ENCODE measurements at regions of chr3 and their contacts with region 1.

Region 1: GRCh38 chr3:143674100-143674968 is 173.9 kb downstream of the SLC9A9 start:
- DNase-seq: peak; percentile 47
- ATAC-seq: peak; percentile 93
- H3K4me3 Mint-ChIP-seq: peak overlapping the region; percentile 76
- H3K27ac Mint-ChIP-seq: peak overlapping the region; percentile 98
- H3K4me1 Mint-ChIP-seq: peaks cover 56% of the 10 kb centered on the region
- H3K27me3 Mint-ChIP-seq: no peaks in the 10 kb centered on the region
- CTCF ChIP-seq: peak; percentile 72

Region 2: GRCh38 chr3:142828703-142829305 is 845.5 kb before region 1 on chr3:
- CTCF ChIA-PET with region 1: interaction called, 3 read pairs
- POLR2A ChIA-PET with region 1: no interaction called
- intact Hi-C with region 1: loop called (anchors 1 kb)
- DNase-seq: no peak
- ATAC-seq: peak; percentile 75
- H3K4me3 Mint-ChIP-seq: no peak overlapping the region
- H3K27ac Mint-ChIP-seq: no peak overlapping the region
- H3K4me1 Mint-ChIP-seq: no peaks in the 10 kb centered on the region
- H3K27me3 Mint-ChIP-seq: peaks cover 12% of the 10 kb centered on the region
- CTCF ChIP-seq: no peak

Region 3: GRCh38 chr3:143040261-143040879 is 634.0 kb before region 1 on chr3:
- CTCF ChIA-PET with region 1: interaction called, 19 read pairs
- POLR2A ChIA-PET with region 1: no interaction called
- intact Hi-C with region 1: loop called (anchors 1 kb)
- DNase-seq: no peak
- ATAC-seq: no peak
- H3K4me3 Mint-ChIP-seq: no peak overlapping the region
- H3K27ac Mint-ChIP-seq: no peak overlapping the region
- H3K4me1 Mint-ChIP-seq: peaks cover 3% of the 10 kb centered on the region
- H3K27me3 Mint-ChIP-seq: no peaks in the 10 kb centered on the region
- CTCF ChIP-seq: no peak

Region 4: DNA sequence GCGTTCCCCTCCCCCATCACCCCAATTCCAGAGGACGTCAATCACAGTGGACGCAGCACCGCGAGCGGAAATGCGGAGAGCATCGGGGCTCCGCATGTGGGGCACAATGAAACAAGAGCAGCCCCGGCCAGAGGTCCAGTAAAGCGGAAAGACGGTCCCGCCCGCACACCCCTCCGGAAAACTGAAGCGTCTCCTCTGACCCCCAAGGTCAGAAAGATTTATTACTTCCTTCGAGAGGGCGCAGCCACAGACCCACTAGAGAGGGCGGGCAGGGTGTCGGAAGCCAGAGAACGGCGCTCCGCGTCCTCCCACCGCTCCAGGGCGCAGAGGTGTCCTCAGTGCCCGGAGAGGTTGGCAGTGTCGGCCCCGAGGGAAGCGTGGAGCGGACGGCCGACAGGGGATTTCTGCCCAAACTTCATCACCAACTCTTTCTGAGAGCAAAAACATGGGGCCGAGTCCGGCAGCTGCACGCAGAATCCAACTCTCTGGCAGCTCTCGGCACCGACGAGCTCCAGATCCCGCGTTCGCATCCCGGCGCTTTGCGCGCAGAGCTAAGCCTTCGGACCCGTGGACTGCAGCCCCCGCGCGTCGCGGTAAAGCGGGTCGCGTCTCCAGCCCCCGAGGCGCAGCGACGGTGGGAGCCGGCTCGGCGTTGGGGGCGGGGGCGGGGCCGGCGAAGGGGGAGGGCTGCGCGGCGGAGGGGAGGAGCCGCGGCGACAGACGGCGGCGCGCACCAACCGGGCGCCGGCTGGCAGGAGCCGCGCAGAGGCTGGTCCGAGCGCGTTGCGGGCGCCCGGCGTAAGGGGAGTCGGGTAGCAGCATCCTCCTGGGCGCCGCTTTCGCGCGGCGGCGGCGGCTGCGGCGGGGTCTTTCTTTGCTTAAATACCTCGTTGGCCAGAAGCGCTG is 555.1 kb before region 1 on chr3 and contains the start of gene CHST2:
- CTCF ChIA-PET with region 1: interaction called, 12 read pairs
- POLR2A ChIA-PET with region 1: no interaction called
- intact Hi-C with region 1: loop called (anchors 1 kb)
- DNase-seq: peak; percentile 77
- ATAC-seq: peak; percentile 89
- H3K4me3 Mint-ChIP-seq: peak within 1 kb of the TSS; percentile 90
- H3K27ac Mint-ChIP-seq: peak within 1 kb of the TSS; percentile 78
- H3K4me1 Mint-ChIP-seq: peaks cover 32% of the 10 kb centered on the region
- H3K27me3 Mint-ChIP-seq: no peaks in the 10 kb centered on the region
- CTCF ChIP-seq: no peak
- total RNA-seq, gene CHST2: 11.8 and 12.3 TPM in 2 replicates

Region 5: DNA sequence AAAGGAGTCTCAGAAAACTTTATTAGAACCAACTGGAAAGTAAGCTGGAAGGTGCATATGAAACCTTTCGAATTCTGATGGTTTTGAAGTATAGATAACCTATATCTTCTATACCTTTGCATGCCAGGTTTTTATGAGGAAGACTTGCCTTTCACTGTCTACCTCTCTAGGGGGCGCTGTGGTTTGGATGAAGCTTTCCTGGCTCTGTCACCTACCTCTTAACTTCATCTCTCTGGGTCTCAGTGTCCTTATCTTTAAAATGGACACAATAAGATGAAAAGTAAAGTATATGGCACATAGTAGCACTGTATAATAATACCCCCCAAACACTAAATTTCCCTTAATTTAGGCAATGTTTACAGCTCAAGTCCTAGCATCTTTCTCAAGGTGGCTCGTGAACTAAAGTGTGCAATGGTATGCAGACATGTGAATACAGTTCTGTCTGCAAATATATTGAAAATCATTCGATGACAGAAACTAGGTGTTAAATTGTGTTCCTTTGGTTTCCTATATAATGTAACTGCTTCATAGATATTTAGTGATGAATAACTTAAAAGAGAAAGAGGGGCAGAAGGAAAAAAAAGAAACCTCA is 240.5 kb before region 1 on chr3:
- CTCF ChIA-PET with region 1: interaction called, 6 read pairs
- POLR2A ChIA-PET with region 1: interaction called, 4 read pairs
- intact Hi-C with region 1: loop called (anchors 1 kb)
- DNase-seq: no peak
- ATAC-seq: no peak
- H3K4me3 Mint-ChIP-seq: no peak overlapping the region
- H3K27ac Mint-ChIP-seq: no peak overlapping the region
- H3K4me1 Mint-ChIP-seq: peaks cover 24% of the 10 kb centered on the region
- H3K27me3 Mint-ChIP-seq: no peaks in the 10 kb centered on the region
- CTCF ChIP-seq: no peak

Region 6: GRCh38 chr3:143535994-143536784 is 138.1 kb before region 1 on chr3:
- CTCF ChIA-PET with region 1: interaction called, 4 read pairs
- POLR2A ChIA-PET with region 1: no interaction called
- intact Hi-C with region 1: loop called (anchors 1 kb)
- DNase-seq: no peak
- ATAC-seq: peak; percentile 68
- H3K4me3 Mint-ChIP-seq: peak overlapping the region; percentile 64
- H3K27ac Mint-ChIP-seq: peak overlapping the region; percentile 79
- H3K4me1 Mint-ChIP-seq: peaks cover 61% of the 10 kb centered on the region
- H3K27me3 Mint-ChIP-seq: no peaks in the 10 kb centered on the region
- CTCF ChIP-seq: no peak